ENCODE measurements at regions of chr6 and their contacts with region 1.

Region 1: GRCh38 chr6:21754891-21755290 is 161.3 kb downstream of the SOX4 start:
- DNase-seq: peak; percentile 66 to 91
- H3K4me3 ChIP-seq: peak overlapping the region; percentile 13; the same call in 1 of the 2 replicates
- H3K27ac ChIP-seq: peak overlapping the region; percentile 73
- H3K4me1 ChIP-seq: peaks cover 53% of the 10 kb centered on the region
- H3K27me3 ChIP-seq: no peaks in the 10 kb centered on the region
- CTCF ChIP-seq: no peak

Region 2: DNA sequence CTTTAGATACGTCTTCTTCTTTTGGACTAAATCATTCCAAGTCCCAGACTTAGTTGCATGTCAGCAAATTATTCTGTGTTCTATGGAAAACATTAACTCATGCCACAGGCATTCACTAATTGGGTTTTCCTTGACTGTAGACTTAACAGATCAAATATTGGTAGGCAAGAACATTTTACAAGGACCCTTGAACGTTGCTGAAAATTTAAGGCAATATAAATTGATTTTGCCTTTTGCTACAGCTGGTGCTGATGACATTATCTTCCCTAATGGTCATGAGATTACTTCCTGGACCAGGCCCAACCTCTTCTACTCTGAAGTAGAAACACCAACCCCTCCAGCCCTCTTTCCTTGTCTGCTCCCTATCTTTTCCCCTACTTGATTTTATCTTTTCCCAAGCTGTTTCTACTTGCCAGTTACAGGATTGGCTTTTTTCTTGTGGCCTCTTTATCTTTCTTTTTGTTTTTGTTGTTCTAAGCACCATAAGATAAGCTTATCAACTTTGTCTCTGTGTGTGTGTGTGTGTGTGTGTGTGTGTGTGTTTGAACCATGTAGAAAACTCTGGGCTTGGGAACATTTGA is 675.3 kb before region 1 on chr6:
- CTCF ChIA-PET with region 1: no interaction called
- POLR2A ChIA-PET with region 1: no interaction called
- intact Hi-C with region 1: no loop called
- DNase-seq: no peak
- H3K4me3 ChIP-seq: no peak overlapping the region
- H3K27ac ChIP-seq: no peak overlapping the region
- H3K4me1 ChIP-seq: no peaks in the 10 kb centered on the region
- H3K27me3 ChIP-seq: no peaks in the 10 kb centered on the region
- CTCF ChIP-seq: no peak

Region 3: GRCh38 chr6:21679761-21680265 is 75.1 kb before region 1 on chr6:
- CTCF ChIA-PET with region 1: no interaction called
- POLR2A ChIA-PET with region 1: interaction called, 4 read pairs
- intact Hi-C with region 1: loop called (anchors 2 kb)
- DNase-seq: peak; percentile 40 to 72
- H3K4me3 ChIP-seq: no peak overlapping the region
- H3K27ac ChIP-seq: no peak overlapping the region; the same call in 1 of the 2 replicates
- H3K4me1 ChIP-seq: peaks cover 14% of the 10 kb centered on the region; the same call in 1 of the 2 replicates
- H3K27me3 ChIP-seq: no peaks in the 10 kb centered on the region
- CTCF ChIP-seq: no peak

Region 4: GRCh38 chr6:21740376-21741124 is 14.3 kb before region 1 on chr6:
- CTCF ChIA-PET with region 1: interaction called, 13 read pairs
- POLR2A ChIA-PET with region 1: no interaction called
- intact Hi-C with region 1: no loop called
- DNase-seq: no peak
- H3K4me3 ChIP-seq: no peak overlapping the region
- H3K27ac ChIP-seq: no peak overlapping the region
- H3K4me1 ChIP-seq: peaks cover 59% of the 10 kb centered on the region
- H3K27me3 ChIP-seq: no peaks in the 10 kb centered on the region
- CTCF ChIP-seq: no peak

Measured in PC-9 (cell line).